AG04449 (cell line): ENCODE measurements at regions of chr6 and their contacts with region 1.

Region 1: GRCh38 chr6:32853541-32854375 is at the starts of genes PSMB9 and TAP1:
- DNase-seq: peak; percentile 51
- H3K4me3 ChIP-seq: peak within 1 kb of the TSS; percentile 89
- CTCF ChIP-seq: peak; percentile 87

Region 2: GRCh38 chr6:32879691-32880090 is 25.9 kb after region 1 on chr6:
- CTCF ChIA-PET with region 1: interaction called, 10 read pairs
- POLR2A ChIA-PET with region 1: no interaction called
- DNase-seq: no peak
- H3K4me3 ChIP-seq: no peak overlapping the region
- CTCF ChIP-seq: no peak

Region 3: GRCh38 chr6:33904050-33904746 is 1050.4 kb after region 1 on chr6:
- CTCF ChIA-PET with region 1: no interaction called
- POLR2A ChIA-PET with region 1: no interaction called
- DNase-seq: no peak
- H3K4me3 ChIP-seq: no peak overlapping the region
- CTCF ChIP-seq: no peak